ENCODE measurements at regions of chr17 and their contacts with region 1.

Region 1: DNA sequence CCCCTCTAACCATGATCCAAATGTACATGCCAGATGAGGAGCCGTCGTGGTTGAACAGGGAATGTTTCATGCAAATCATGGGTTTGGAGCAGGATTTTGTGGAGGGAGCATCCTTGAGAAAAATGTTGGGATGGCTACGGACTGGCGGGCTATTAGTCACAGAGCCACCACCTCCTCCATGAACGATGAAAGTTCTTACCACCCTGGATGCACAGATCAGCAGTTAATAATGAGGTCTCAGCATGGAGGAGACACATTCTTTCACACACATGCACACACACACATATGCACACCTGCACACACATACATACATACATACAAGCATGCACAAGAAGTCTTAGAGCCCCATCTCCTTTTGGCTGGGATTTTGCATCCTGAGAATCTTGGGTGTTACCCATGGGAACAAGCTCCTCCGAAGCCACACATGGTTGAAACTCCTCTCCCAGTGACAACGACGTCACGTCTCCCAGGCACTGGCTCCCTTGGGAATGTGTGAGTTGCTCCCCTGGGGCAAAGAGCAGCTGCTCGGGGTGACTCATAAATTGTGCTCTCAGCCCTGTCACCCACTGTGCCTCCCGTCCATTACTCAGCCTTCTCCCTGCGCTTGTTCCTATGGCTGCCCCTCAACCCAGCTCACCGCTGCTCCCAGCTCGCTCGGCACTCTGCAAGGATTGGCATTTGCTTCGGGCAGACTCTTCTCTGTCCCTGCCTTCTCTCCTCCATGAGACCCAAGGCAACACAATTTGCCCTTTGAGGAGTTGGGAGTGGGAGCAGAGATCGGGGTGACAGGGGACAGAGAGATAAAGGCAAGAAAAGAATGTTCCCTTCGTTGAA is 344.6 kb downstream of the SOX9 start:
- DNase-seq: peak; percentile 92 to 97
- H3K4me3 ChIP-seq: peak overlapping the region; percentile 53
- H3K27ac ChIP-seq: peak overlapping the region; percentile 100
- H3K4me1 ChIP-seq: peaks cover 79% of the 10 kb centered on the region
- H3K27me3 ChIP-seq: no peaks in the 10 kb centered on the region
- CTCF ChIP-seq: no peak

Region 2: GRCh38 chr17:72270273-72270950 is 195.0 kb before region 1 on chr17:
- CTCF ChIA-PET with region 1: interaction called, 8 read pairs
- POLR2A ChIA-PET with region 1: no interaction called
- intact Hi-C with region 1: loop called (anchors 5 kb)
- DNase-seq: peak; percentile 62 to 82
- H3K4me3 ChIP-seq: no peak overlapping the region
- H3K27ac ChIP-seq: 0 out of 2 replicates have a peak overlapping the region, but pooled peaks have one; percentile 13
- H3K4me1 ChIP-seq: peaks cover 35% of the 10 kb centered on the region
- H3K27me3 ChIP-seq: no peaks in the 10 kb centered on the region
- CTCF ChIP-seq: no peak

Region 3: DNA sequence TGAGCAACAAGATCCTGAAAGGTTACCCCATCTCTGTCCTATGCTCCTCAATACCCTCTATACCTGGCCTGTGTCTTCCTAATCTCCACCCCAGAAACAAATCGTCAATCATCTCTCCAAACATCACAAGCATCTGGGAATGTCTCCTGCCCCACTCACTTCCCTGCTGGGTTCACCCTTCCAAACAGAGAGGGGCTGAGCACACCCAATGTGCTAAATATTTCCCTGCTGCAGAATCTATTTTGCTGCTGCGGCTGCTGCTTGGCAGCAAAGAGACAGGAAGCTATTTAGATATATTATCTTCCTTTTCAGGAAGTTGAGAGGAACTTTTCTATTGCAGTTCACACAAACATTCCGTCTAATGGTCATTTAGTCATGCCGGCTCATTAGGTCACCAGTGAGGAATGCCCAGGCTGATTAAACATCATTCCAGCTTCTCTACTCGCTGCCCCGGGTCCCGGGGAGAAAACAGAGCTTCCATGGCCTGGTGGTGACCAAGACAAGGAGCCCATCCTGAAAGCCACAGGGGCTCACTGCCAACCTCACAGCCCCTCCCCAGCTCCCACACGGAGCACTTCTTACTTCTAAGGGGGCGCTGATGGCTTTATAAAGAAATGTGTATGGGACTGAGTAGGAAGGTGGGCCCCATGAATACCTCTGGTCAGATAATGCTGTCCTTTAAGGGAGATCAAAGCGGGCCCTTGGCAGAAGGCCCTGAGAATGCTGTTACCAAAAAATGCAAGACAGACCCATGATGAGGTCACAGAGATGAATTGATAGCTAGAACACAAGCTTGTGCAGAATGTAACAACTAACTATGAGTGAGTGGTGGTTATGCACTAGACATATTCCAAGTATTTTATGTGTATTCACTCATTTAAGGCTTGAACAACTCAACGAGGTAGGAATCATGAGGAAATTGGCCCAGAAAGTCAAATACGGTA is 126.3 kb before region 1 on chr17:
- CTCF ChIA-PET with region 1: no interaction called
- POLR2A ChIA-PET with region 1: no interaction called
- intact Hi-C with region 1: loop called (anchors 2 kb)
- DNase-seq: peak; percentile 81 to 97
- H3K4me3 ChIP-seq: no peak overlapping the region; the same call in 1 of the 2 replicates
- H3K27ac ChIP-seq: peak overlapping the region; percentile 88
- H3K4me1 ChIP-seq: peaks cover 34% of the 10 kb centered on the region
- H3K27me3 ChIP-seq: no peaks in the 10 kb centered on the region
- CTCF ChIP-seq: no peak

Region 4: GRCh38 chr17:72488551-72489244 is 23.3 kb after region 1 on chr17:
- CTCF ChIA-PET with region 1: no interaction called
- POLR2A ChIA-PET with region 1: no interaction called
- intact Hi-C with region 1: no loop called
- DNase-seq: no peak
- H3K4me3 ChIP-seq: no peak overlapping the region
- H3K27ac ChIP-seq: no peak overlapping the region
- H3K4me1 ChIP-seq: no peaks in the 10 kb centered on the region
- H3K27me3 ChIP-seq: no peaks in the 10 kb centered on the region
- CTCF ChIP-seq: no peak

Measured in PC-9 (cell line).